ENCODE measurements at regions of chr9 and their contacts with region 1.

Region 1: DNA sequence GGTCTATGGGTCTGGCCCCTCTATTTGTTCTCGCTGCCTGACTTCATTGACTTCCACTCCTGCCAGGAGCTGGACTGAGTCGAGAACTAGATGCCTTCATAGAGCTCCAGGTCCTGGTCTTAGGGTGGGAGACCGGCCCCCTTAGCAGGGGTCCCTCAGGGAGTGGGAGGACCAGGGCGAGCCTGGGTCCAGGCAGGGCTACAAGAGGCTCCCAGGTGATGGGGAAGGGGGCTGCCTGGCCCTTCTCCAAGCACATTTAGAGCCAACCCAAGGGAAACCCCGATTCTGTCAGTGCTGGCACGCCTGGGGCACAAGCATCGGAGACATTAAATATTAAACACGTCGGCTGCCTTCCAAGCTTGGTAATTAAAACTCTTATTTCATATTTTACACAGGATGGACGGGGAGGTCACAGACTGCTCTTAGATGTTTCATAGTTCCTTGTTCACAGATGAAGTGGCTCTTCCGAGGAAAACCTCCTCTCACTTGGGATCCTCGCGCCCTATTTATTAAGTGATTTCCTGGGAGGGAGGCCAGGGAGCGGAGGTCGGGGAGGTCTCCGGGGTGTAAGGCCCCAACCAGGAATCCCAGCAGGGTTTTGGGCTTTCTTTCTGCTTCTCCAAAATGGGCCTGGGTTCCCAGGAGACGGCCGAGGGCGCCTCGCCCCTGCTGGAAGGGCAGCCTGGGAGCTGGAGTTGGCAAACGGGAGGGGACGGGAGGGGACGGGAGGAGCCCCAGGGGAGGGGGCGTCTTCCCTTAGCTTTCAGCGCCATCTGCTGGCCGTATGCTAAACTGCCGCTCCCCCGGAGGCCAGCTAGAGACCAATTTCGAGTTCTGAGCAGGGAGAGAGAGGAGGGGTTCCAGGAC is 23.4 kb upstream of the ZBTB43 start:
- DNase-seq: peak; percentile 68
- ATAC-seq: peak; percentile 90
- H3K4me3 ChIP-seq: no peak overlapping the region
- H3K27ac ChIP-seq: no peak overlapping the region
- H3K4me1 ChIP-seq: peaks cover 0 to 9% of the 10 kb centered on the region in 2 experiments; a peak in 2 of 4 replicates
- H3K27me3 ChIP-seq: no peaks in the 10 kb centered on the region
- CTCF ChIP-seq: peak; percentile 90 to 94 (median 91)
- POLR2A ChIP-seq: no peak
- RAD21 ChIP-seq: peak; percentile 96

Region 2: DNA sequence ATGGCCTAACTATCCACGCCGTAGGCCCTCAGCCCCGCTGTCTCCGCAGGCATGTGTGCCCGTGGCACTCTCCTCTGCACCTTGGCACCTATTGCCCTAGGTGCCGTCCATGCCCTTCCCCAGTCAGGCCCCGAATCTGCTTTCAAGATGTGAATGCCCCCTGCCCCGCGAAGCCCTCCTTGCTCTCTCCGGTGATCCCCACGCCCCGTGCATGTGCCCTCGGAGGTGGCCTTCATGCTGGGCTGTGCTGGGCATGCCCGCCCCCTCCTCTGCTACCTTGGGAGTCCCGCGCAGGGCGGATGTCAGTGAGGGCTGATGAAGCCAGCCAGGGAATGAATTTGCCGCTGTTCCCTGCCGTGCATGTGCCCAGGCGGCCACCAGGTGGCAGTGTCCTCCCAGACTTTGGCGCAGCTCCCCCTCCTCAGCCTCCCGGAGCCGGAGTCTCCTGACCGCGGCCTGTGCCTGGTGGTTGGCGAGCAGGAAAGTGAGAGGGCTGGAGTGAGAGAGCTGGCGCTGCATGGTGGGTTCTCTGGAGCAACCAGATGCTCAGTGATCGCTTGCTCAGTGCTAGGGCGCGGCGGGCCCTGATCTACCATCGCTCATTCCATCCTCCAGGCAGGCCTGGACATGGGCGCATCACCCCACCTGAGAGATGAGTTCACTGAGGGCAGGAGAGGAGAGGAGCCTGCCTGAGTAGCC is 280.6 kb before region 1 on chr9:
- CTCF ChIA-PET with region 1: interaction called, 25 read pairs
- POLR2A ChIA-PET with region 1: no interaction called
- RAD21 ChIA-PET with region 1: interaction called, 3 read pairs
- intact Hi-C with region 1: loop called (anchors 1 kb)
- DNase-seq: peak; percentile 19
- ATAC-seq: peak; percentile 82
- H3K4me3 ChIP-seq: no peak overlapping the region
- H3K27ac ChIP-seq: no peak overlapping the region; the same call in 1 of the 2 replicates
- H3K4me1 ChIP-seq: peaks cover 0 to 13% of the 10 kb centered on the region in 2 experiments; a peak in 1 of 4 replicates
- H3K27me3 ChIP-seq: no peaks in the 10 kb centered on the region
- CTCF ChIP-seq: peak; percentile 87 to 90 (median 88)
- POLR2A ChIP-seq: no peak
- RAD21 ChIP-seq: peak; percentile 91

Region 3: DNA sequence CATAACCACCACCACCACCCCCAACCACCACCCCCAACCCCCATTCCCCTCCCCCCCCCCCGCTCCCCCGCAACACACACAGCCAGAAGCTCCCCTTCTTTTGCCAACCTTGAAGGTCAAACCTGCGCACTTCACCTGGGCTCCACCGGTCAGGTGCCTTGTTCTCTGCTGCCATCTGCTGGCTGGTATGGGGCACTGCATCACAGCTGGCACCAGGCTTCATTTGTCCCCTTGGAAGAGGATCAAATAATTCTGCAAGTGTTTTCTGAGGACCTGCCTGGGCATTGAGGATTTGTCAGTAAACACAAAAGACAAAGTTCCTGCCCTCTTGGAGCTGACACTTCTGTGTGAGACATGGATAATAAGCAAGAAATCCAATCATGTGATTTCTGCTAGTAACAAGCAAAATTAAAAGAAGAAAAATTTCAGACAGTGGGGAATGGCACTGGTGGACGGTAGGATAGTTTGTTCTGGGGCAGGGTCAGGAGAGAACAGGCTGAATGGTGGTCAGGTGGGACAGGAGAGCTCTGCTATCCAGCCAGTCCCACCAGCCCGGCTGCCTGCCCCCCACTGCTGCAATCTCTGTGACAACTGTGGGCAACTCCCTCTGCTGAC is 223.3 kb before region 1 on chr9:
- CTCF ChIA-PET with region 1: interaction called, 8 read pairs
- POLR2A ChIA-PET with region 1: no interaction called
- RAD21 ChIA-PET with region 1: no interaction called
- intact Hi-C with region 1: loop called (anchors 5 kb)
- DNase-seq: peak; percentile 39
- ATAC-seq: peak; percentile 94
- H3K4me3 ChIP-seq: no peak overlapping the region
- H3K27ac ChIP-seq: no peak overlapping the region
- H3K4me1 ChIP-seq: no peaks in the 10 kb centered on the region
- H3K27me3 ChIP-seq: peaks cover 29% of the 10 kb centered on the region
- CTCF ChIP-seq: peak; percentile 89 to 99 (median 95)
- POLR2A ChIP-seq: no peak
- RAD21 ChIP-seq: peak; percentile 89

Region 4: DNA sequence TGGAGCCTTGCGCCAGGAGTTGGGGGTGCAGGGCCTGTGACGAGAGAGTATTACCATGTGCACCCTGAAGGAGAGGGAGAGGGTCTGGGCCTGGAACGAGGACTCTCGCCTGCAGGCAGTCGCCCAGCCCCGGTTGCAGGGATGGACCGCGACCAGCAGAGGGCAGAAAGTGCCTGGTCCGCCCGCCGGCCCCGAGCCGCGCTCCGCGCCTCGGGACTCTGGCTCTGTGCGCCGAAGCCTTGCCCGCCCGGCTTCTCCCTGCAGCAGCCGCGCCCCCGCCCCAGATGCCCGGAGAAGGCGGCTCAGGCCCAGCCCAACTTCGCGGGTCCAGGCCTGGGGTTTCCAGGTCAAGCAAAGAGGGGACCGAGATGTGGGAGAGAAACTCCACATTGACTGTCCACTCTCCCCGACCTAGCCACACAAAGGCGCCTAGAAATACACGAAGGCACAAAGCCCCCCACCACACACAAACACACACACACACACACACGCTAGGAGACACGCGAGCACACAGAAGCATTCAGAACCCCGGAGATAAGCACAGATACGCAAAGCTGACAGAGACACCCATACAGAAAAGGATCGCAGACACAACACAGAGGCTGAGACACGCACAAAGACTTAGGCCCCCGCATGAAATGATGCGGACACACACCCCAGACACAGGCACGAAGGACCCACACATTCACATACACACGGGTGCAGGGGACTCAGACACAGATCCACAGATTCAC is 169.7 kb before region 1 on chr9:
- CTCF ChIA-PET with region 1: interaction called, 6 read pairs
- POLR2A ChIA-PET with region 1: no interaction called
- RAD21 ChIA-PET with region 1: no interaction called
- intact Hi-C with region 1: loop called (anchors 1 kb)
- DNase-seq: peak; percentile 32
- ATAC-seq: peak; percentile 84
- H3K4me3 ChIP-seq: no peak overlapping the region; a peak in 1 of 4 replicates
- H3K27ac ChIP-seq: no peak overlapping the region
- H3K4me1 ChIP-seq: peaks cover 7 to 30% of the 10 kb centered on the region in 2 experiments; a peak in 3 of 4 replicates
- H3K27me3 ChIP-seq: no peaks in the 10 kb centered on the region
- CTCF ChIP-seq: peak; percentile 74 to 78 (median 77)
- POLR2A ChIP-seq: no peak
- RAD21 ChIP-seq: peak; percentile 81

Region 5: GRCh38 chr9:126661521-126662220 is 119.7 kb before region 1 on chr9:
- CTCF ChIA-PET with region 1: interaction called, 10 read pairs
- POLR2A ChIA-PET with region 1: no interaction called
- RAD21 ChIA-PET with region 1: no interaction called
- intact Hi-C with region 1: no loop called
- DNase-seq: peak; percentile 12
- ATAC-seq: peak; percentile 61
- H3K4me3 ChIP-seq: no peak overlapping the region
- H3K27ac ChIP-seq: peak overlapping the region; percentile 62
- H3K4me1 ChIP-seq: peaks cover 30 to 45% of the 10 kb centered on the region in 2 experiments
- H3K27me3 ChIP-seq: no peaks in the 10 kb centered on the region
- CTCF ChIP-seq: no peak
- POLR2A ChIP-seq: no peak
- RAD21 ChIP-seq: no peak

Region 6: GRCh38 chr9:126690431-126691350 is 90.7 kb before region 1 on chr9:
- CTCF ChIA-PET with region 1: interaction called, 23 read pairs
- POLR2A ChIA-PET with region 1: no interaction called
- RAD21 ChIA-PET with region 1: interaction called, 3 to 4 read pairs
- intact Hi-C with region 1: no loop called
- DNase-seq: peak; percentile 24
- ATAC-seq: peak; percentile 87
- H3K4me3 ChIP-seq: no peak overlapping the region
- H3K27ac ChIP-seq: no peak overlapping the region
- H3K4me1 ChIP-seq: 0 out of 4 replicates have a peak, but pooled peaks cover 0 to 3% of the 10 kb centered on the region in 2 experiments
- H3K27me3 ChIP-seq: no peaks in the 10 kb centered on the region
- CTCF ChIP-seq: peak; percentile 71 to 86 (median 78)
- POLR2A ChIP-seq: no peak
- RAD21 ChIP-seq: peak; percentile 59

Region 7: GRCh38 chr9:126704873-126705766 is 76.3 kb before region 1 on chr9:
- CTCF ChIA-PET with region 1: interaction called, 340 read pairs
- POLR2A ChIA-PET with region 1: interaction called, 11 read pairs
- RAD21 ChIA-PET with region 1: interaction called, 34 to 43 read pairs
- intact Hi-C with region 1: loop called (anchors 1 kb)
- DNase-seq: peak; percentile 47
- ATAC-seq: peak; percentile 59
- H3K4me3 ChIP-seq: peak overlapping the region; percentile 15 to 43
- H3K27ac ChIP-seq: no peak overlapping the region; the same call in 1 of the 2 replicates
- H3K4me1 ChIP-seq: peaks cover 15 to 35% of the 10 kb centered on the region in 2 experiments
- H3K27me3 ChIP-seq: no peaks in the 10 kb centered on the region
- CTCF ChIP-seq: peak in 2 of 3 experiments; percentile 80 to 89; a peak in 4 of 6 replicates
- POLR2A ChIP-seq: no peak
- RAD21 ChIP-seq: no peak

Region 8: DNA sequence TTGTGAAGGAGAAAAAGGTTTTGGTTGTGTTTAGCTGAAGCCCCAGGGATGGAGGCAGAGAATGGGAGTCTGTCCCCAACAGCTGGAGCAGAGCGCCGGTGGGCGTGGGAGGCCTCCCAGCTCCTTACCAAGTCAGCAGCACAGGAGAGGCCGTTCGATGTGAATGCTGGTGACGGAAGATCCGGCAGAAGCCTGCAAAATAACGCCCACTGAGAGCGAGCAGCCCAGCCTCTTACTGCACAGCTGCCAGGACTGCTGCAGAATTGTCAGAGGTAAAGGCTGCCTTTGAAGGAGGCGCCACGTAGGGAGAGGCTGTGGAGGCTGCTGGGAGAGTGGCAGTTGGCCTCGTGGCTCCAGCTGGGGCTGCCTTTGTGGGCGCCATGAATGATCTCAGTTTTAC is 314.8 kb after region 1 on chr9:
- CTCF ChIA-PET with region 1: no interaction called
- POLR2A ChIA-PET with region 1: no interaction called
- RAD21 ChIA-PET with region 1: no interaction called
- intact Hi-C with region 1: no loop called
- DNase-seq: no peak
- ATAC-seq: no peak
- H3K4me3 ChIP-seq: no peak overlapping the region
- H3K27ac ChIP-seq: no peak overlapping the region
- H3K4me1 ChIP-seq: no peaks in the 10 kb centered on the region
- H3K27me3 ChIP-seq: no peaks in the 10 kb centered on the region
- CTCF ChIP-seq: no peak
- POLR2A ChIP-seq: no peak
- RAD21 ChIP-seq: no peak